Left cardiac atrium (tissue), 4 donors: ENCODE measurements at regions of chr11 and their contacts with region 1.

Region 1: GRCh38 chr11:126122863-126123262 is 60.2 kb upstream of the CDON start:
- DNase-seq: no peak
- ATAC-seq: peak in 1 of 2 donors; percentile 13

Region 2: GRCh38 chr11:126147208-126148111 is 24.6 kb after region 1 on chr11:
- intact Hi-C with region 1: loop called in 1 of 2 experiments (anchors 1 kb)
- DNase-seq: no peak
- ATAC-seq: peak in 1 of 2 donors; percentile 34